Caco-2 (cell line): ENCODE measurements at regions of chr17 and their contacts with region 1.

Region 1: GRCh38 chr17:70074956-70075355 is at the start of gene KCNJ16:
- DNase-seq: peak; percentile 89 to 95
- H3K4me3 ChIP-seq: no peak within 1 kb of the TSS
- H3K4me3 Mint-ChIP-seq: peak within 1 kb of the TSS; percentile 63
- H3K27ac Mint-ChIP-seq: peak within 1 kb of the TSS; percentile 78
- H3K4me1 ChIP-seq: peaks cover 40% of the 10 kb centered on the region
- H3K4me1 Mint-ChIP-seq: peaks cover 32% of the 10 kb centered on the region
- H3K27me3 ChIP-seq: no peaks in the 10 kb centered on the region
- H3K27me3 Mint-ChIP-seq: no peaks in the 10 kb centered on the region
- CTCF ChIP-seq: no peak
- total RNA-seq, gene KCNJ16: 8.0 and 9.3 TPM in 2 replicates

Region 2: GRCh38 chr17:69761751-69762321 is 313.1 kb before region 1 on chr17:
- CTCF ChIA-PET with region 1: no interaction called
- POLR2A ChIA-PET with region 1: no interaction called
- intact Hi-C with region 1: loop called (anchors 10 kb)
- DNase-seq: peak; percentile 44 to 62
- H3K4me3 ChIP-seq: no peak overlapping the region
- H3K4me3 Mint-ChIP-seq: peak overlapping the region; percentile 8
- H3K27ac Mint-ChIP-seq: peak overlapping the region; percentile 78
- H3K4me1 ChIP-seq: peaks cover 38% of the 10 kb centered on the region
- H3K4me1 Mint-ChIP-seq: peaks cover 30% of the 10 kb centered on the region
- H3K27me3 ChIP-seq: no peaks in the 10 kb centered on the region
- H3K27me3 Mint-ChIP-seq: no peaks in the 10 kb centered on the region
- CTCF ChIP-seq: no peak

Region 3: GRCh38 chr17:69812240-69812837 is 262.6 kb before region 1 on chr17:
- CTCF ChIA-PET with region 1: no interaction called
- POLR2A ChIA-PET with region 1: no interaction called
- intact Hi-C with region 1: loop called (anchors 1 kb)
- DNase-seq: peak in 1 of 2 experiments; percentile 24
- H3K4me3 ChIP-seq: no peak overlapping the region
- H3K4me3 Mint-ChIP-seq: no peak overlapping the region
- H3K27ac Mint-ChIP-seq: peak overlapping the region; percentile 30
- H3K4me1 ChIP-seq: no peaks in the 10 kb centered on the region
- H3K4me1 Mint-ChIP-seq: peaks cover 15% of the 10 kb centered on the region
- H3K27me3 ChIP-seq: no peaks in the 10 kb centered on the region
- H3K27me3 Mint-ChIP-seq: no peaks in the 10 kb centered on the region
- CTCF ChIP-seq: no peak

Region 4: DNA sequence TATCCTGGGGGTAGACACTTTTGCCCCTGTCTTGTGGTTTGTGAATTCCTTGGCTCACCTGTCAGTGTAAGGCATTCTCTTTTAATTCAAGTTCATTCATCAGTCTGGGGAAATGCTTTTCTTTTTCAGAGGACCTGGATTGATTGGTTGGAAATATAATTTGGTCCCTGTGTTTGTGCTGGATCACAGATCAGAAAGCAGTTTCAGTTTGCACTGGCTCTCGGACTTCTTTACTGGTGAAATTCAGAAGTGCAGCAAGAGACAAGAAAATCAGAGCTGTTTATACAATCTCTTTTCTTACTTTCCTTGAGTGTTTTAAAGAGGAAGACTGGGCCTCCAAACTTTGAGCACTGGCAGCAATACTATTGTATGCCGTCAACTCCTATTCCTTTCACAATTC is 161.7 kb before region 1 on chr17:
- CTCF ChIA-PET with region 1: no interaction called
- POLR2A ChIA-PET with region 1: no interaction called
- intact Hi-C with region 1: loop called (anchors 10 kb)
- DNase-seq: no peak
- H3K4me3 ChIP-seq: no peak overlapping the region
- H3K4me3 Mint-ChIP-seq: no peak overlapping the region
- H3K27ac Mint-ChIP-seq: no peak overlapping the region
- H3K4me1 ChIP-seq: peaks cover 8% of the 10 kb centered on the region; the same call in 1 of the 2 replicates
- H3K4me1 Mint-ChIP-seq: peaks cover 6% of the 10 kb centered on the region
- H3K27me3 ChIP-seq: no peaks in the 10 kb centered on the region
- H3K27me3 Mint-ChIP-seq: no peaks in the 10 kb centered on the region
- CTCF ChIP-seq: no peak

Region 5: GRCh38 chr17:70055000-70055399 is 20.0 kb before region 1 on chr17:
- CTCF ChIA-PET with region 1: no interaction called
- POLR2A ChIA-PET with region 1: interaction called, 3 read pairs
- intact Hi-C with region 1: loop called (anchors 1 kb)
- DNase-seq: peak in 1 of 2 experiments; percentile 34
- H3K4me3 ChIP-seq: no peak overlapping the region
- H3K4me3 Mint-ChIP-seq: peak overlapping the region; percentile 64
- H3K27ac Mint-ChIP-seq: peak overlapping the region; percentile 69
- H3K4me1 ChIP-seq: peaks cover 67% of the 10 kb centered on the region
- H3K4me1 Mint-ChIP-seq: peaks cover 63% of the 10 kb centered on the region
- H3K27me3 ChIP-seq: no peaks in the 10 kb centered on the region
- H3K27me3 Mint-ChIP-seq: no peaks in the 10 kb centered on the region
- CTCF ChIP-seq: no peak

Region 6: DNA sequence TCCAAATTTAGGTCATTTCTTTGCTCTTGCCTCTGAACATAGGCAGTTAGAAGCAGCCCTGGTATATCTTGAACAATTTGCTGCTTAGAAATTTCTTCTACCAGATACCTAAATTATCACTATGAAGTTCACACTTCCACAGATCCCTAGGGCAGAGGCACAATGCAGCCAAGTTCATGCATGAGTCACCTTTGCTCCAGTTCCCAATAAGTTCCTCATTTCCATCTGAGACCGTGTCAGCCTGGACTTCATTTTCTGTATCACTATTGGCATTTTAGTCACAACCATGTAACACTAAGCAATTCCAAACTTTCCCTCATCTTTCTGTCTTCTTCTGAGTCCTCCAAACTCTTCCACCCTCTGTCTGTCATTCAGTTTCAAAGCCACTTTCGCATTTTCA is 45.0 kb after region 1 on chr17:
- CTCF ChIA-PET with region 1: no interaction called
- POLR2A ChIA-PET with region 1: no interaction called
- intact Hi-C with region 1: no loop called
- DNase-seq: no peak
- H3K4me3 ChIP-seq: no peak overlapping the region
- H3K4me3 Mint-ChIP-seq: no peak overlapping the region
- H3K27ac Mint-ChIP-seq: no peak overlapping the region
- H3K4me1 ChIP-seq: peaks cover 27% of the 10 kb centered on the region
- H3K4me1 Mint-ChIP-seq: peaks cover 25% of the 10 kb centered on the region
- H3K27me3 ChIP-seq: no peaks in the 10 kb centered on the region
- H3K27me3 Mint-ChIP-seq: no peaks in the 10 kb centered on the region
- CTCF ChIP-seq: no peak

Region 7: DNA sequence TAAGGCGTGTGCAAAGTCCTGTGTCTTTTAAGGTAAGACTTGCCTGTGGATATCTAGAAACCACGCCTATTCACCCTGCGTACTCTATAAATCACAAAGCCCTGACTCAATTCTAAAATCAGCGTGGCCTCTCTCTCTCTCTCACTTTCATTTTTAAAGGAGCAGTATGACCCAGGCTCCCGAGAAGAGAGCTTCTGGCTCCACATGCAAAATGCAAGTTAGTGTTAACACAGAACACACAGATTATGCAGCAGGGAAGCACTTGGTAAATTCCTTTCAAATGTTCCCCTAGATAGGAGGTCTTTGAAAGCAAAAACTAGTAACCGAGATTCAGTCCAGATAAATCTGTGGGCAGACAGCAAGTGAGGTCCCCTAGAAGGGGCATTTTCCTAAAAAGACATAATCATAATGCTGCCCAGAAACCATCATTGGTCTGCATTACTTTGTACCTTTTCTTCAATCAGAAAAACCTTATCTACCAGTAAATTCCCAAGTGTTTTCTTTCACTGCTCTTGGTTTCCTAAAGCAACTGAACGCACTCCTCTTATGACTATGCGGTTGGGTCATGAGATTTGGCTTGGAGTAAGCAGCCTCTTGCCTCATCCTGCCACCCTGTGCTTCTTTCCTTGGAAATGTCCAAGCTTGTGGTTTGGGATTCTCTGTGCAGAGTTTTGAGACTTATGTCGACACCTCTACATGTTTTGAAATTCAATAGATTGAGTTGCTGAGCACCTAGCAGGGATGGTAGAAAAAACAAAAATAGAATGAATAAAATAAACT is 62.7 kb after region 1 on chr17:
- CTCF ChIA-PET with region 1: no interaction called
- POLR2A ChIA-PET with region 1: no interaction called
- intact Hi-C with region 1: loop called (anchors 1 kb)
- DNase-seq: peak in 1 of 2 experiments; percentile 25
- H3K4me3 ChIP-seq: no peak overlapping the region
- H3K4me3 Mint-ChIP-seq: peak overlapping the region; percentile 69
- H3K27ac Mint-ChIP-seq: peak overlapping the region; percentile 79
- H3K4me1 ChIP-seq: peaks cover 22% of the 10 kb centered on the region
- H3K4me1 Mint-ChIP-seq: peaks cover 20% of the 10 kb centered on the region
- H3K27me3 ChIP-seq: no peaks in the 10 kb centered on the region
- H3K27me3 Mint-ChIP-seq: no peaks in the 10 kb centered on the region
- CTCF ChIP-seq: no peak